Activated B cell treated with CpG ODN at 0.5 μM for 24 hours (primary cell): ENCODE measurements at regions of chr2 and their contacts with region 1.

Region 1: DNA sequence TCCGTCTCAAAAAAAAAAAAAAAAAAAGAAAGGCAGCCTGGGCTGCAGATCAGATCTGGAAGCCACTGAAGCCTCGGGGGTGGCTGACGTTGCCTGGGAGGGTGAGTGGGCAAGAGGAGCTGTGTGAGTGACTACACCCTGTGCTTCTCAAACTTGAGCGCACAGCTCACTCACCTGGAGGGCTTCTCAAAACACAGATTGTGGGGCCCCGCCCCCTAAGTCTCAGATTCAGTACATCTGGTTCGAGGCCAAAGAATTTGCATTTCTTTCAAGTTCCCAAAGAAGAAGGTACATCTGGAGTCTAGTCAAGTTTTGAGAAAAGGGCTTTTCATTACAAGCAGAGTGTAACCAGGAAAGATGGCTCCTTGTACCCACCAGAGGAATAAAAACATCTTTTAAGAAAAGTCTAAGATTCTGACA is 97.7 kb upstream of the CAB39 start:
- DNase-seq: peak; percentile 46
- ATAC-seq: peak; percentile 80
- H3K4me3 Mint-ChIP-seq: peak overlapping the region; percentile 64
- H3K27ac Mint-ChIP-seq: peak overlapping the region; percentile 71
- H3K4me1 Mint-ChIP-seq: peaks cover 51% of the 10 kb centered on the region
- H3K27me3 Mint-ChIP-seq: no peaks in the 10 kb centered on the region
- CTCF ChIP-seq: no peak

Region 2: DNA sequence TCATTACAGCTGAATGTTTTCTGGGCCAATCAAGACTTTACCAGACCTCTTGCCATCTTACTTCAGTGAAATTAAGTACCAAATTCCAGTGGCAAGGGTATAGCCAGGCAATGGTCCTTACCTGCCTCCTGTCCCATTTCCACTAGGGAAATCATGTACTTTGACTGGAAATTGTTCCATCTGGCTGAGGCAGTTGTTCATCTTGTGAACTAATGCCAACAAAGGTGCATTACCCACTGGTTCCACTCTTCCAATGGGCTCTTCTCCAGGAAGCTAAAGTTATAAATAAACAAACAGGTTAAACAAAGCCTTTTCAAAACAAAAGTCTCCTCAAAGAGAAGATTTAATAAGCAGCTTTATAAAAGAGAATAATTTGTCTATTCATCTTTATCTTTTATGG is 819.9 kb before region 1 on chr2:
- CTCF ChIA-PET with region 1: no interaction called
- POLR2A ChIA-PET with region 1: no interaction called
- intact Hi-C with region 1: loop called (anchors 2 kb)
- DNase-seq: no peak
- ATAC-seq: no peak
- H3K4me3 Mint-ChIP-seq: no peak overlapping the region
- H3K27ac Mint-ChIP-seq: no peak overlapping the region
- H3K4me1 Mint-ChIP-seq: no peaks in the 10 kb centered on the region
- H3K27me3 Mint-ChIP-seq: no peaks in the 10 kb centered on the region
- CTCF ChIP-seq: no peak

Region 3: DNA sequence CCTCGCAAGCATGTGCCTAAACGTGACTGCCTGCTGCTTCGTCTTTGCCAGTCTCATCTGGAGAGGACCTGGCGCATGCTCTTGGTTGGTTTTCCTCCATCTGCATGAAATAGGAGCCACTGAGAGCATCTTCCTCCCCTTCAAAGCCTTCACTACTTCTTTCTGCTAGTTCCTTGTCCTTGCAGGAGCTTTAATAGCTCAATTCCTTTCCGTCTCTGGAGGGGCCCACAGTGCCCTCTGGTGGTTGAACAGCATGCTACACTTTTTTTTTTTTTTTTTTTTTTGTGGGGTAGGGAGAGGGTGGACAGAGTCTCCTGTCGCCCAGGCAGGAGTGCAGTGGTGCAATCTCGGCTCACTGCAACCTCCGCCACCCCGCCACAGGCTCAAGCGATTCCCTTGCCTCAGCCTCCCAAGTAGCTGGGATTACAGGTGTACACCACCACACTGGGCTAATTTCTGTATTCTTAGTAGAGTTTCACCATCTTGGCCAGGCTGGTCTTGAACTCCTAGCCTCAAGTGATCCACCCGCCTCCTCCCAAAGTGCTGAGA is 454.7 kb before region 1 on chr2:
- CTCF ChIA-PET with region 1: interaction called, 3 read pairs
- POLR2A ChIA-PET with region 1: interaction called, 4 read pairs
- intact Hi-C with region 1: loop called (anchors 1 kb)
- DNase-seq: peak; percentile 34
- ATAC-seq: peak; percentile 42
- H3K4me3 Mint-ChIP-seq: no peak overlapping the region
- H3K27ac Mint-ChIP-seq: no peak overlapping the region
- H3K4me1 Mint-ChIP-seq: peaks cover 24% of the 10 kb centered on the region
- H3K27me3 Mint-ChIP-seq: no peaks in the 10 kb centered on the region
- CTCF ChIP-seq: no peak

Region 4: DNA sequence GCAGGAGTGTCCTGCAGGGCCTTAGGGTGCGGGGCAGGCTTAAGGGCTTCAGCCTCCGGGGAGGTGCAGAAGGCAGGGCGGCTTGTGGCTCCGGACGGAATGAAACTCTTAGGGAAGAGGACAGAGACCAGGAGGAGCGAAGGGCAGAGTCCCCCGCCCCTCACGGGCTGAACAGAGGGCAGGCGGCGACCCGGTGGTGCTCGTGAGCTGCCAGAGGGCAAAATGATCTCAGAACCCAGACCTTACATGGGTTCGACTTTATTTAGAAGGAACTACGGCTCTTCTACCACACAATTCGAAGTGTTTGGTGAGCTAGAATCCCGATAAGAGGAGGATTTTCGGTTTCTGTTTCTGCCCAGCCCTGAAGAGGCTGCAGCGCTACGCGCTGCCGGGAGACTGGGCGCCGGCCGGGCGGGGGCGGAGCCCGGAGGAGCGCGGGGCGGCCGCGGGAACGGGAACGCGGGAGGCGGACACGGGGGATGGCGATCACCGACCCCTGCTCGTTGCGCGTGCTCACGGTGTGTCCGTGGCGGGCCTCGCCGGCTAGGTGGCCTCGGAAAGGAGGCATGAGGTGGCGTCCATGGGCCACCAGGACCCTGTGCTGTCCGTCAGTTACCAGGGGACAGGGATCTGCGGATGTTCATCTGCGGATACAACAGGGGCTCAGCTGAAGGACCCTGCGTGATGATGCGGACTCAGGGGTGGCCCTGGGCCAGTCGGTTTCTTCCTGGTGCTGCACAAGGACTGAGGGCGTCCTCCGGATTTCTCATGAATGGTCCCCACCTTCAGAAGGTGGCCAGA is 203.2 kb before region 1 on chr2:
- CTCF ChIA-PET with region 1: interaction called, 3 read pairs
- POLR2A ChIA-PET with region 1: interaction called, 9 read pairs
- intact Hi-C with region 1: loop called (anchors 1 kb)
- DNase-seq: peak; percentile 61
- ATAC-seq: peak; percentile 67
- H3K4me3 Mint-ChIP-seq: peak overlapping the region; percentile 99
- H3K27ac Mint-ChIP-seq: peak overlapping the region; percentile 99
- H3K4me1 Mint-ChIP-seq: peaks cover 74% of the 10 kb centered on the region
- H3K27me3 Mint-ChIP-seq: no peaks in the 10 kb centered on the region
- CTCF ChIP-seq: no peak

Region 5: DNA sequence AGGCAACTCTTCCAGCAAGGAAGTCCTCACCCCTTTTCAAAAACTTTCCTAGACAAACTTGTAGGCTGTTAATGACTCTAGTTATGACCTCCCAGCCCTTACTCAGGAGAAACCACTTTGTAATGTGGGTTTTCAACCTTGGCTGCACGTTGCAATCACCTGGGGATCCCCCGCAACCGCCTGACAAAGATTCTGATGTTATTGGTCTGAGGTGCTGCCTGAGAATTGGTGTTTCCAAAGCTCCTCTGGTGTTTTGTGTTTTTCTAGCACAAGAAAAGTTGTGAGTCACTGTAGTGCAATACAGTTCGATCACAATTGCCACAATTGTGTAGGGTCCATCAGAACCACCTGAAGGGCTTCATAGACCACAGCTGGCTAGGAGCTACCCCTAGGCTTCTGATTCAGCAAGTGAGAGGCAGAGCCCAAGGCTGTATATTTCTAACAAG is 77.4 kb before region 1 on chr2:
- CTCF ChIA-PET with region 1: no interaction called
- POLR2A ChIA-PET with region 1: interaction called, 5 read pairs
- intact Hi-C with region 1: loop called (anchors 2 kb)
- DNase-seq: no peak
- ATAC-seq: peak; percentile 85
- H3K4me3 Mint-ChIP-seq: peak overlapping the region; percentile 53
- H3K27ac Mint-ChIP-seq: peak overlapping the region; percentile 79
- H3K4me1 Mint-ChIP-seq: peaks cover 55% of the 10 kb centered on the region
- H3K27me3 Mint-ChIP-seq: no peaks in the 10 kb centered on the region
- CTCF ChIP-seq: no peak

Region 6: GRCh38 chr2:230634146-230634545 is 19.2 kb after region 1 on chr2:
- CTCF ChIA-PET with region 1: no interaction called
- POLR2A ChIA-PET with region 1: interaction called, 10 read pairs
- intact Hi-C with region 1: no loop called
- DNase-seq: no peak
- ATAC-seq: no peak
- H3K4me3 Mint-ChIP-seq: no peak overlapping the region
- H3K27ac Mint-ChIP-seq: no peak overlapping the region
- H3K4me1 Mint-ChIP-seq: peaks cover 12% of the 10 kb centered on the region
- H3K27me3 Mint-ChIP-seq: no peaks in the 10 kb centered on the region
- CTCF ChIP-seq: no peak

Region 7: DNA sequence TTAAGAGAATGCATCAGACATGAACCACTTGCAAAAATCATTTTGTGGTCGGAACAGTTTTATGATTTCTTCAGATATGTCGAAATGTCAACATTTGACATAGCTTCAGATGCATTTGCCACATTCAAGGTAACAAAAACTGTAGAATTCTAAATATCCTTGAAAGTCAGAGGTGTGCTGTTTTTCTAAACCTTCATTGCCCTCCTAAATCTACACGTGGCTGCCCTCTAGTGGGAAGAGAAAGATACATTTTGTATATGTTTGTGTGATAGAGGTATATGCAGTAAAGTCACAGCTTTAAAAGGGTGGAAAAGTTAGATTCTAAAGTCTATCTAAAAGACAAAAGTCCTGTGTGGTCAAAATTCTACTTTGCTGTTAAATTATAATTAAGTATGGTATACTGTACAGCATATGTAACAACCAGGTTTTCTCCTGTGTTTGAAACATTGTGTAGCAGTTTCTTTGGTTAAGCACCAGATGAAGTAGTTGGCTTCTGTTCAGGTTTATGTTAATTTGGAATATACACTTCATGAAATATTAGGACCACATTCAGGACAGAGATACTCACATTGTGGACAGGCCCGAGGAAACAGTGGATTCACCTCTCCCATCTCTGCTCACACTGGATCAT is 184.0 kb after region 1 on chr2:
- CTCF ChIA-PET with region 1: interaction called, 17 read pairs
- POLR2A ChIA-PET with region 1: interaction called, 4 read pairs
- intact Hi-C with region 1: loop called (anchors 1 kb)
- DNase-seq: no peak
- ATAC-seq: peak; percentile 46
- H3K4me3 Mint-ChIP-seq: no peak overlapping the region
- H3K27ac Mint-ChIP-seq: no peak overlapping the region
- H3K4me1 Mint-ChIP-seq: peaks cover 14% of the 10 kb centered on the region
- H3K27me3 Mint-ChIP-seq: no peaks in the 10 kb centered on the region
- CTCF ChIP-seq: no peak